ENCODE measurements at regions of chr17 and their contacts with region 1.

Region 1: DNA sequence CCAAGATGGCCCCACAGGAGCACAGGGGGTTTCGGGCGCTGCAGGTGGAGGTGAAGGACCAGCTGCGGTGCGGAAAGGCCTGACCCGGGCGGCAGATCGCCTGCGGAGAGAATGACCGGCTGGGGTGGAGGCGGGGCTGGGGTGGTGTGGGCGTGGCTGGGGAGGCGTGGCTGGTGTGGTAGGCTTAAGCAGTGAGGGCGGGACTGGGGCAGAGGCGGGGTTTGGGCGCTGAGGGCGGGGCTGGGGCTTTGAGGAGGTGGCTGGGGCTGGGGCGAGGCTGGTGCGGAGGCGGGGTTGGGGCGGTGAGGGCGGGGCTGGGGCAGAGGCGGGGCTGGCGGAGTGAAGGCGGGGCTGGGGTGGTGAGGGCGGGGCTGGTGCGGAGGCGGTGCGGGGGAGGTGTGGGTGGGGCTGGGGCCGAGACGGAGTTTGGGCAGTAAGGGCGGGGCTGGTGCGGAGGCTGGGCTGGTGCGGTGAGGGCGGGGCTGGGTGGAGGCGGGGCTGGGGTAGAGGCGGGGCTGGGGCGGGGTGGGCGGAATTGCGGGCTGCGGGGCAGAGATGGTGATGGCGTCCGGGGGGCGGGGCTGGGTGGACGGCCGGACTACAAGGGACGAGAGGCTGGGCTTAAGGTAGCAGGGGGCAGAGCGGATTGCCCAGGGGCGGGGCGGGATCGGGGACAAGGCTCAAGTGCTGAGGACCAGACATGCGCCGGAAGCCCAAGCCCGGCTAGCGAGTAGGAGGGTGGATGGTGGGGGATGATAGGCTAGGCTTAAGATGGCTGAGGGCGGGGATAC is 9.9 kb upstream of the GSDMA start:
- H3K4me3 ChIP-seq: peak overlapping the region; percentile 31
- H3K27ac ChIP-seq: peak overlapping the region; percentile 70; the same call in 1 of the 2 replicates
- H3K4me1 ChIP-seq: peaks cover 3% of the 10 kb centered on the region
- CTCF ChIP-seq: no peak

Region 2: DNA sequence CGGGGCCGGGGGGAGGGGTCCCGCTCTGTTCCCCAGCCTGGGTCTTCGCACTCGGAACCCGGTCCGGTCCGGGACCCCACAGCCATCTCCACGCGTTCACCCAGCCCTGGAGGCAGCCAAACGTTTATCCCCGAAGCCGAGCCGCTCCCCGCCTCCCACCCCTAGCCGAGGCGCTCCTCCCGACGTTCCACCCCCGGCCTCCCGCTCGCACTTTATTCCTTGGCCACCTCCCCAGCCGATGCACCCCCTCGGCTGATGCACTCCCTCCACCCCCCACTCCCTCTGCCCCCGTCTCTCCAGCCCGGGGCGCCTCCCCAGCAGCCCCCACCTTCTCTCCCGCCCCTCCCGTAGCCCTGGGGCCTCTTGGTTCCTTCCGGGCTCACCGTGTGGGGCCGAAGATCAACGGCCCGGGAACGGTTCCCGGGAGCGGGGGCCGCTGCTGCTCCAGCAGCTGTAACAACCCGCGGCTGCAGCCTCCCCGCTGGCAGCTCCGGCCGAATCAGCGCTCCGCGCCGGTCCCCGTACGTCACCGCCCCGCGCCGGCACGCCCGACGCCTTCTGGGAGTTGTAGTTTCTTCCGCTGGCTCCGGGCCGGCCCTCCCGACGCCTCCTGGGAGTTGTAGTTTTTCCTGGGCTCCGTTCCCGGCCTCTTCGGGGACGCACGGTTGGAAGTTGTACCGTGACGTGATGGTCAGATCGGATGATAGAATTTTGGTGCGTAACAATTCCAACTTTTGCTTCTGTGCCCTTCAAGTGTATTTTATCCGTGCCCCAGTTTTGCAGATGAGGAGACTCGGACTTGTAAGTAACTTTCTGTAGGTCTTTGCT is 25.6 kb before region 1 on chr17 and contains the starts of genes LRRC3C and ORMDL3:
- CTCF ChIA-PET with region 1: interaction called, 8 read pairs
- POLR2A ChIA-PET with region 1: interaction called, 14 read pairs
- H3K4me3 ChIP-seq: peak within 1 kb of the TSS; percentile 92
- H3K27ac ChIP-seq: peak within 1 kb of the TSS; percentile 84
- H3K4me1 ChIP-seq: peaks cover 18% of the 10 kb centered on the region
- CTCF ChIP-seq: 0 out of 2 replicates have a peak, but pooled peaks have one; percentile 11

Region 3: GRCh38 chr17:39939588-39940419 is 13.1 kb before region 1 on chr17:
- CTCF ChIA-PET with region 1: interaction called, 35 read pairs
- POLR2A ChIA-PET with region 1: interaction called, 8 read pairs
- H3K4me3 ChIP-seq: no peak overlapping the region
- H3K27ac ChIP-seq: no peak overlapping the region
- H3K4me1 ChIP-seq: peaks cover 5% of the 10 kb centered on the region; the same call in 1 of the 2 replicates
- CTCF ChIP-seq: peak; percentile 77

Region 4: GRCh38 chr17:39972271-39972670 is 19.4 kb after region 1 on chr17:
- CTCF ChIA-PET with region 1: interaction called, 72 read pairs
- POLR2A ChIA-PET with region 1: interaction called, 3 read pairs
- H3K4me3 ChIP-seq: no peak overlapping the region
- H3K27ac ChIP-seq: no peak overlapping the region
- H3K4me1 ChIP-seq: no peaks in the 10 kb centered on the region
- CTCF ChIP-seq: no peak

Region 5: DNA sequence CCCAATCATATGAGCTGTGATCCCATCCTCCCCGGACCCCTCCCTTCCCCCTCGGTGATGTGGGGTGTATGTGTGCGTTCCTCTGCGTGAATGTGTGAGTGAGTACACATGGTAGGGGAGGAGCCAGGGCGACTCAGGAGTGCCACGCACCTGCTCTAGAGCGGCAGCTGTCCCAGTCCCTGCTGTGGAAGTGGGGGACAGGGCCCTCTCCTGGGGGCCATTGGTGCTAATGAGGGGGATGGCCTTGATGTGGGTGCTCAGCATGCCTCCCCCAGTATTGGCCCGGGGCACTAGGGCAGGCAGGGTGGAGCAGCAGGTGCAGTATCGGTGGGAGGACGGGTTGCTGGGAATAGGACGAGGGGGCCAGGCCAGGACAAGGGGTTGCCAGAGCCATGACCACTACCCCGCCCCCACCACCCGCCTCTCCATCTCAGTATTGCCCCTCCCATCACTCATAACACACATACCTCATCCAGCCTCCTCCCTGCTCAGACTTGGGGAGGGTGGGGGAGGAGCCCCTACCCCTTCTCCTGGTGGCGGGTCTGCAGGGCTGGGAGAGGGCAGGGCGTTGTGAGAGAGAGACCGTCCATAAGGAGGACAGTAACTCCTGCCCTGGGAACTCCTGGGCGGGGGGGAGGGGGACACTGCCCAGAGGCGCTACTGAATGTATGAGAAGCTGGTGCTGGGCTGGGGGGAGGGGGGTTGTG is 139.0 kb after region 1 on chr17:
- CTCF ChIA-PET with region 1: no interaction called
- POLR2A ChIA-PET with region 1: no interaction called
- H3K4me3 ChIP-seq: no peak overlapping the region
- H3K27ac ChIP-seq: no peak overlapping the region
- H3K4me1 ChIP-seq: no peaks in the 10 kb centered on the region
- CTCF ChIP-seq: no peak